ENCODE measurements at regions of chr1 and their contacts with region 1.

Region 1: DNA sequence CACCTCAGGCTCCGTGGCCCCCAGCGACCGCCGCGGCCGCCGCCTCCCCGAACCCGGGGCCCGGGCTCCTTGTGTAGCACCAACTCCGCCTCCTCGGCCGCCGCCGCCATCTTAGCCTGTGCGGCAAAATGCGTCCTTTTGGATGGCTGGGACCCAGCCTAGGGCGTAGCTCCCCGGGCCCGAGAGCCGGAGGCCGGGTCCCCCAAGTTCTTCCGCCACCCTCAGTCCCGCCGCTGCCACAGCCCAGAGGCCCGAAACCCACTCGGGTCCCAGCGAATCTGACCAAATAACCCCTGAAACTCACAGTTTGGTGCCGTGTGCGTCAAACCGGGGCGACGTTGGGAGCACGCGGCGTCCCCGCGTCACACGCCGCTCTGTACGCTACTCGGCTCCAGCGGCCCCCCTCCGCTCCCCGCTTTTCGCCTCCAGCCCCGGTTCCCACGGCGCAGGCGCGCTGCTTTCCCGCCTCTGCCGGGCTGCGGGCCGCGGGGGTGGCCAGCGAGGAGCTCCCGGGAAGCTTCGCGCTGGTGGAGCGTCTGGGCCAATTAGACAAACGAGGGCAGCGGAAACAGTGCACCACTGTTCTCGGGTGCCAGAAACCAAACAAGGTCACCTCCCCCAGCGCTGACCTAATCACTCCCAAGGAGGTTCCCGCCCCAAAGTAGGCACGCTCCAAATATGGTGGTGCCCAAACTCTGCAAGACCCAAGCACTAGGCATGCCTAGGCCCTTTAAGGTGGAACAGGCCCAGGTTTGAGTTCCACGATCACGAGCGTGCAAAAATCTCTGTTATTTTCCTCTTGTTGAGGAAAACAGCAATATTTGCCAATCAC is at the start of gene ZNF644:
- DNase-seq: peak; percentile 91
- ATAC-seq: peak; percentile 95 to 99 (median 96)
- H3K4me3 ChIP-seq: peak within 1 kb of the TSS; percentile 54 to 95 (median 86)
- H3K27ac ChIP-seq: peak within 1 kb of the TSS; percentile 98 to 100 (median 100)
- H3K4me1 ChIP-seq: peaks cover 0 to 53% (median 42%) of the 10 kb centered on the region in 9 donors
- H3K27me3 ChIP-seq: no peaks in the 10 kb centered on the region
- CTCF ChIP-seq: no peak
- total RNA-seq, gene ZNF644: 28.9 to 48.0 (median 34.0) TPM

Region 2: DNA sequence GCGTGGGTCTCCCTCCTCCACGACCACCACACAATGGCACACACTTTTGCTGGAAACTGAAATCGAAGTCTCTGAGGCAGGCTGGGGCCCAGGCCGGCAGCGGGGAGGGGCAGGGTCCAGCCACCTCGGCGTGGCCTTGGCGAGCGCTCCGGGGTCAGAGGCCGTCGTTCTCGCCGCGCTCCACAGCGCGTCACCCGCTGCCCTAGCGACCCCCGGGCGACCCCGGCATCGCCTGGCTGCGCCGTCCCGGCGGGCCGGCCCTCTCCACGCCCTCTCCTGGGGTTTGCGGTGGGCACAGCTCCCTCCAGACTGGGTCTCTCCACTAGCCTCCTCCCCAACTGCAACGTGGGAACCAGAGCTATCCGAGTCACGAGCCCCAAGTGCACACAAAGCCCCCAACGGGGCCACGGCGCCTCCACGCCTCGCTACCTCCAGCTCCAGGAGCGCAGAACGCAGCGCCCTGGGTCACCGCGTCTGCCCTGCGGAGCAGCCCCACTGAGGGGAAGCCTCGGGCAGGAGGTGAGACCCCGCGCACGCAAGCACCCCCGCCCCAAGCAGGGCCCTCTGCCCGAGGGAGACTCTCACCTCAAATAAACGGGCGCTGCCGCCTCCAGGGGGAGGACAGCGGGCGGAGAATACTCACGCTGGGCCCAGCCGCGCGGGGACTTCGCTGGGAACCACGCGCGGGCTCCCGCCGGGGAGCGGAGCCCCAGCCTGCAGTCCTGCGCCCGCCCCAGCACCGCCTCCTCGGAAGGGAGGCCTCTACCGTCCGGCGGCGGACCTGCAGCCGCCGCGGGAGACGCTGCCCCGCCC is 170.8 kb before region 1 on chr1:
- intact Hi-C with region 1: loop called in 4 of 10 experiments (anchors 5 to 10 kb)
- DNase-seq: peak; percentile 78 to 87
- ATAC-seq: peak; percentile 97 to 99 (median 98)
- H3K4me3 ChIP-seq: peak overlapping the region; percentile 78 to 96 (median 88)
- H3K27ac ChIP-seq: peak overlapping the region in 8 of 10 donors; percentile 15 to 73 (median 52)
- H3K4me1 ChIP-seq: peaks cover 0 to 18% (median 9%) of the 10 kb centered on the region in 9 donors
- H3K27me3 ChIP-seq: peaks cover 0 to 37% (median 0%) of the 10 kb centered on the region in 7 donors
- CTCF ChIP-seq: peak; percentile 70 to 94 (median 93)

Region 3: GRCh38 chr1:90911353-90911752 is 110.5 kb before region 1 on chr1:
- intact Hi-C with region 1: no loop called
- DNase-seq: no peak
- ATAC-seq: no peak
- H3K4me3 ChIP-seq: no peak overlapping the region
- H3K27ac ChIP-seq: no peak overlapping the region
- H3K4me1 ChIP-seq: peaks cover 0 to 4% (median 0%) of the 10 kb centered on the region in 9 donors
- H3K27me3 ChIP-seq: no peaks in the 10 kb centered on the region
- CTCF ChIP-seq: no peak